ENCODE measurements at regions of chr6 and their contacts with region 1.

Region 1: GRCh38 chr6:28080631-28081485 is 490 bp downstream of the ZNF165 start:
- DNase-seq: peak; percentile 75 to 96
- H3K4me3 ChIP-seq: peak overlapping the region; percentile 56 to 72
- H3K27ac ChIP-seq: peak overlapping the region; percentile 83
- H3K4me1 ChIP-seq: peaks cover 0 to 7% of the 10 kb centered on the region in 2 donors
- H3K27me3 ChIP-seq: no peaks in the 10 kb centered on the region
- CTCF ChIP-seq: no peak

Region 2: GRCh38 chr6:27188885-27189418 is 891.9 kb before region 1 on chr6:
- intact Hi-C with region 1: loop called (anchors 2 kb)
- DNase-seq: peak in 1 of 2 donors; percentile 76
- H3K4me3 ChIP-seq: peak overlapping the region; percentile 75 to 78
- H3K27ac ChIP-seq: peak overlapping the region; percentile 85 to 90
- H3K4me1 ChIP-seq: peaks cover 0 to 2% of the 10 kb centered on the region in 2 donors
- H3K27me3 ChIP-seq: no peaks in the 10 kb centered on the region
- CTCF ChIP-seq: peak; percentile 63 to 82 (median 71)

Region 3: GRCh38 chr6:28104392-28105244 is 23.8 kb after region 1 on chr6:
- intact Hi-C with region 1: loop called (anchors 1 kb)
- DNase-seq: peak; percentile 26 to 86
- H3K4me3 ChIP-seq: peak overlapping the region; percentile 82 to 88
- H3K27ac ChIP-seq: peak overlapping the region; percentile 73 to 79
- H3K4me1 ChIP-seq: peaks cover 0 to 3% of the 10 kb centered on the region in 2 donors
- H3K27me3 ChIP-seq: no peaks in the 10 kb centered on the region
- CTCF ChIP-seq: peak; percentile 72 to 80 (median 79)

Region 4: DNA sequence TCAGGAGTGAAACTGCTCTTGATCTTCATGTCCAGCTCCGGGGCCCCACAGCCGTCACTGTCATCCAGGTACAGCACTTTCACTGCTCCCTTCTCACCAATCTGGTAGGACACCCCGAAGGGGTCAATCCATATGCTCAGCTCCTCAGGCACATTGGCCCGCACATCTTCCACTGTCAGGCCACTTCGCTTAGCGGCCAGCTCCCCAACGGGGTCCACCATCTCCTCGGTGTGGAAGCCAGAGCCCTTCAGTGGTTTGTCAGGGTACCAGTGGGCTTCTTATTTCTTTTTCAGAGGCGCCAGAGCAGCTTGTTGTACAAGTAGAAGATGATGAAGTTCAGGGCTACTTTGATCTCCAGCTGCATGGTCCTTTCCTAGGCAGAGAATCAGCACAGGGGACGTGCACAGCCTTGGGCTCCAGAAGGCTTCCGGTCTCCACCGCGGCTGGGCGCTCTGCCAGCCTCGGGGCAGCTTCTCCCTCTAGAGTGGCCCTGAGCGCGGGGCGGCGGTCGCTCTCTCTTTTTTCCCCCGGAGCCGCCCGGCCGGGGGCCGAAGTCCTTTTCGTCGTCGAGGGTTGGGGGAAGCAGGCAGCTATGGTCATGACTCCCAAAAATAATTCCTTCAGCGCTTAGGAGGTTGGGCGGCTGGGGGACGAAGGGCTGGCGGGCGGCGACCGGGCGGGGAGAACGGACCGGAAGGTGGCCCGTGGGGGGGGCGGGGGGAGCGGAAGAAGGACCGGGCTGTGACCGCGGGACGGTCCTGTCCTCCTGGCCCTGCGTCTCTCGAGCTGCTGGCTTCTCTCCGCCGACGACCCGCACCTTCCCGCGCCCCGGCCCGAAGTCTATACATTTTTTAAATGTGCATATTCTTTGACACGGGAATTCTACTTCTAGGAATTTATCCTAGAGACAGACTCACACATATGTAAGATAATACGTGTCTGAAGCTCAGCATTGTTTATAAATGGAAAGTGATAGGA is 137.7 kb after region 1 on chr6:
- intact Hi-C with region 1: loop called (anchors 5 kb)
- DNase-seq: peak in 1 of 2 donors; percentile 78
- H3K4me3 ChIP-seq: peak overlapping the region; percentile 59 to 86
- H3K27ac ChIP-seq: peak overlapping the region; percentile 57 to 63
- H3K4me1 ChIP-seq: peaks cover 0 to 3% of the 10 kb centered on the region in 2 donors
- H3K27me3 ChIP-seq: no peaks in the 10 kb centered on the region
- CTCF ChIP-seq: no peak

Region 5: GRCh38 chr6:28258877-28259767 is 178.3 kb after region 1 on chr6 and contains the start of gene NKAPL:
- intact Hi-C with region 1: no loop called
- DNase-seq: peak; percentile 28 to 90
- H3K4me3 ChIP-seq: peak within 1 kb of the TSS; percentile 48 to 66
- H3K27ac ChIP-seq: peak within 1 kb of the TSS in 1 of 2 donors; percentile 19
- H3K4me1 ChIP-seq: no peaks in the 10 kb centered on the region
- H3K27me3 ChIP-seq: no peaks in the 10 kb centered on the region
- CTCF ChIP-seq: no peak
- total RNA-seq, gene NKAPL: not detected